ENCODE measurements at regions of chr17 and their contacts with region 1.

Region 1: DNA sequence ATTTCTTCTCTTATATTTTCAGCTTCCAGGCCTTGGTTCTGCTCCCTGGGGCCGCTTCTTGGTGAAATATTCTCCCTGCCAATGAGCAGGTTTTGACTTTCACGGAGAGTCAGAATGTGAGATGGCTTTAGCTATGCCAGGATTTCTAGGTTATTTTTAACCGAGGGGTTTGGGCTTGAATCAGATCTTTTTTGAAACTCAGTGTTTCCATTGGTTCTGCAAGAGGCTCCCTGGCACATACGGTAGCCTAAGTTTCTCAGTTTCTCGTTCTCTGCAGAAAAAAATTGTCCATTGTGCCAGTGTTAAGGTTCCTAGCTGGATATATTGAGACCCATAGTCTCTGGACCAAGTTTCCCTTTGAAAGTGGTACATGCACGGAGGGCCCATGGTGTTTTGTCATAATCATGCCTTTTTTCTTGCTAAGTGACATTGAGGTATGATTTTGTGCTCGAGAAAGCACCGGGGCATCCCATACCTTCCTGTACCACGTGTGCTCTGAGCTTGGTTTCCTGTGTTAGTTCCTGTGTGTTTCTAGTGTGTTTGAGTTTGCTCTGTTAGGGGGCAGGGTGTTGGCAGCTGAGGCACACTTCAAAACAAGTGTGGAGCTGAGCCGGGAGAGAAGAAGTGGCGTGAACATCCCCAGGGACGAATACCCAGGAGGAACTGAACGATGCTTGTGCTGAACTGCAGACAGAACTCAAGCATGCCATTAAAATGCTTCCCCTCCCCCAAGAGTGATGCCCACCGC is 127.2 kb downstream of the HS3ST3B1 start:
- DNase-seq: peak; percentile 18 to 90 (median 63)
- ATAC-seq: peak; percentile 97
- H3K4me3 ChIP-seq: peak overlapping the region; percentile 30 to 48
- H3K4me3 Mint-ChIP-seq: peak overlapping the region; percentile 76
- H3K27ac ChIP-seq: peak overlapping the region; percentile 25 to 67
- H3K27ac Mint-ChIP-seq: peak overlapping the region; percentile 90
- H3K4me1 ChIP-seq: peaks cover 44% of the 10 kb centered on the region
- H3K4me1 Mint-ChIP-seq: peaks cover 66% of the 10 kb centered on the region
- H3K27me3 ChIP-seq: no peaks in the 10 kb centered on the region
- H3K27me3 Mint-ChIP-seq: no peaks in the 10 kb centered on the region
- CTCF ChIP-seq: no peak

Region 2: GRCh38 chr17:14203388-14203787 is 224.7 kb before region 1 on chr17:
- CTCF ChIA-PET with region 1: no interaction called
- POLR2A ChIA-PET with region 1: interaction called, 3 read pairs
- intact Hi-C with region 1: loop called in 1 of 2 experiments (anchors 5 kb)
- DNase-seq: peak in 5 of 9 experiments; percentile 41 to 70 (median 56)
- ATAC-seq: peak; percentile 40
- H3K4me3 ChIP-seq: no peak overlapping the region
- H3K4me3 Mint-ChIP-seq: no peak overlapping the region
- H3K27ac ChIP-seq: peak overlapping the region; percentile 34 to 66
- H3K27ac Mint-ChIP-seq: peak overlapping the region; percentile 81
- H3K4me1 ChIP-seq: peaks cover 85% of the 10 kb centered on the region
- H3K4me1 Mint-ChIP-seq: peaks cover 83% of the 10 kb centered on the region
- H3K27me3 ChIP-seq: no peaks in the 10 kb centered on the region
- H3K27me3 Mint-ChIP-seq: no peaks in the 10 kb centered on the region
- CTCF ChIP-seq: peak; percentile 63

Region 3: DNA sequence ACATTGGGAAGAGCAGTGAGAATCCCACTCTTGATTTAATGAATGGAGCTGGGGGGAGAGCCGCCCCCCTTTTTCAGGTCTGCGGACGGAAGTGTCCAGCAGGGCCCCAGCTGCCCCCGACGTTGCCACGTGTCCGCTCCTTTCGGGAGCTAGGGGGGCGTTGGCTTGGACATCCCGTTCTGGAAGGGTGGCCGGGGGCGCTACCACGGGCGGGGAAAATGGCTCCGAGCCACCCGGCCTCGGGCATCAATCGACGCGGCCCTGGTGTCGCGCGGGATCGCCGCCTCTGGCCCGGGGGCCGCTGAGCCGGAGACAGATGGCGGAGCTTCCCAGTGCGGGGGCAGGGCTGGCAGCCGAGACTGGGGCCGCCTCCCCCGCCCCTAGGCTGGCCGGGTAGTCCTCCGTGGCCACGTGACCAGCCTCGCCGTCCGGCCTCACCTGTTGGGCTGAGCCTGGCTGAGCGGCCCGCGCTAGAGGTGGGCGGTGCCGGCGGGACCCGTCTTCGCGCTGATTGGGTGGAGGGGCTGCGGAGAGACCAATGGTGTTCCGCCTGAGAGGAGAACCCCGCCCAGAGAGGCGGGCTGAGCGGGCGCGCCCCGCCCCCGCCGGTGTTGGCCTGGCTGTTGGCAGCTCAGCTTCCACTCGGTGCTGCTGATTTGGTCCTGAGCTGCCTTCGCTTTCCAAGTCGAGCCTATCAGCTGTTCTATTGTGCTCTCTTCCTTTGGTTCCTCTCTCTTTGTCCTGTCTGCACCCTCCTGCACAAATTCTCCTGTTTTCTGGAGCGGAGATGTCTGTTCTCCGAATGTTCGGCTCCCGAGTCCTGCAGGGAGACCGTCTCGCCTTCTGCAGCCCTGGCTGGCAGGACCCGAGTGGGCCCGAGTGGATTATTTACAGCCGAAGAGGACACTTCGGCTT is 118.9 kb before region 1 on chr17:
- CTCF ChIA-PET with region 1: no interaction called
- POLR2A ChIA-PET with region 1: no interaction called
- intact Hi-C with region 1: loop called in 1 of 2 experiments (anchors 2 kb)
- DNase-seq: peak; percentile 79 to 92 (median 90)
- ATAC-seq: peak; percentile 100
- H3K4me3 ChIP-seq: peak overlapping the region; percentile 41 to 52
- H3K4me3 Mint-ChIP-seq: peak overlapping the region; percentile 83
- H3K27ac ChIP-seq: peak overlapping the region in 1 of 2 experiments; percentile 41
- H3K27ac Mint-ChIP-seq: peak overlapping the region; percentile 29
- H3K4me1 ChIP-seq: peaks cover 39% of the 10 kb centered on the region
- H3K4me1 Mint-ChIP-seq: peaks cover 66% of the 10 kb centered on the region
- H3K27me3 ChIP-seq: no peaks in the 10 kb centered on the region
- H3K27me3 Mint-ChIP-seq: no peaks in the 10 kb centered on the region
- CTCF ChIP-seq: no peak

Region 4: GRCh38 chr17:14409292-14409691 is 18.8 kb before region 1 on chr17:
- CTCF ChIA-PET with region 1: interaction called, 7 read pairs
- POLR2A ChIA-PET with region 1: interaction called, 16 read pairs
- intact Hi-C with region 1: loop called (anchors 1 to 2 kb)
- DNase-seq: no peak
- ATAC-seq: no peak
- H3K4me3 ChIP-seq: no peak overlapping the region
- H3K4me3 Mint-ChIP-seq: no peak overlapping the region
- H3K27ac ChIP-seq: no peak overlapping the region
- H3K27ac Mint-ChIP-seq: no peak overlapping the region
- H3K4me1 ChIP-seq: peaks cover 13% of the 10 kb centered on the region
- H3K4me1 Mint-ChIP-seq: peaks cover 22% of the 10 kb centered on the region
- H3K27me3 ChIP-seq: no peaks in the 10 kb centered on the region
- H3K27me3 Mint-ChIP-seq: no peaks in the 10 kb centered on the region
- CTCF ChIP-seq: no peak

Region 5: GRCh38 chr17:14417336-14417735 is 10.7 kb before region 1 on chr17:
- CTCF ChIA-PET with region 1: no interaction called
- POLR2A ChIA-PET with region 1: interaction called, 8 read pairs
- intact Hi-C with region 1: loop called in 1 of 2 experiments (anchors 1 kb)
- DNase-seq: no peak
- ATAC-seq: no peak
- H3K4me3 ChIP-seq: no peak overlapping the region
- H3K4me3 Mint-ChIP-seq: no peak overlapping the region
- H3K27ac ChIP-seq: no peak overlapping the region
- H3K27ac Mint-ChIP-seq: no peak overlapping the region
- H3K4me1 ChIP-seq: no peaks in the 10 kb centered on the region
- H3K4me1 Mint-ChIP-seq: no peaks in the 10 kb centered on the region
- H3K27me3 ChIP-seq: no peaks in the 10 kb centered on the region
- H3K27me3 Mint-ChIP-seq: no peaks in the 10 kb centered on the region
- CTCF ChIP-seq: no peak

Region 6: GRCh38 chr17:14442790-14443528 is 14.9 kb after region 1 on chr17:
- CTCF ChIA-PET with region 1: interaction called, 4 read pairs
- POLR2A ChIA-PET with region 1: interaction called, 6 read pairs
- intact Hi-C with region 1: loop called in 1 of 2 experiments (anchors 2 kb)
- DNase-seq: no peak
- ATAC-seq: no peak
- H3K4me3 ChIP-seq: no peak overlapping the region
- H3K4me3 Mint-ChIP-seq: no peak overlapping the region
- H3K27ac ChIP-seq: no peak overlapping the region
- H3K27ac Mint-ChIP-seq: no peak overlapping the region
- H3K4me1 ChIP-seq: no peaks in the 10 kb centered on the region
- H3K4me1 Mint-ChIP-seq: peaks cover 7% of the 10 kb centered on the region
- H3K27me3 ChIP-seq: no peaks in the 10 kb centered on the region
- H3K27me3 Mint-ChIP-seq: no peaks in the 10 kb centered on the region
- CTCF ChIP-seq: no peak

Region 7: GRCh38 chr17:14813649-14814365 is 385.7 kb after region 1 on chr17:
- CTCF ChIA-PET with region 1: no interaction called
- POLR2A ChIA-PET with region 1: no interaction called
- intact Hi-C with region 1: no loop called
- DNase-seq: peak in 3 of 9 experiments; percentile 16 to 42 (median 35)
- ATAC-seq: no peak
- H3K4me3 ChIP-seq: no peak overlapping the region
- H3K4me3 Mint-ChIP-seq: no peak overlapping the region
- H3K27ac ChIP-seq: no peak overlapping the region
- H3K27ac Mint-ChIP-seq: no peak overlapping the region
- H3K4me1 ChIP-seq: no peaks in the 10 kb centered on the region
- H3K4me1 Mint-ChIP-seq: no peaks in the 10 kb centered on the region
- H3K27me3 ChIP-seq: no peaks in the 10 kb centered on the region
- H3K27me3 Mint-ChIP-seq: peaks cover 5% of the 10 kb centered on the region
- CTCF ChIP-seq: no peak